Posterior cingulate gyrus (tissue), 11 donors: ENCODE measurements at regions of chr21 and their contacts with region 1.

Region 1: GRCh38 chr21:44709426-44710293 is 1.7 kb downstream of the TSPEAR start:
- DNase-seq: peak in 2 of 10 donors; percentile 7 to 80

Region 2: DNA sequence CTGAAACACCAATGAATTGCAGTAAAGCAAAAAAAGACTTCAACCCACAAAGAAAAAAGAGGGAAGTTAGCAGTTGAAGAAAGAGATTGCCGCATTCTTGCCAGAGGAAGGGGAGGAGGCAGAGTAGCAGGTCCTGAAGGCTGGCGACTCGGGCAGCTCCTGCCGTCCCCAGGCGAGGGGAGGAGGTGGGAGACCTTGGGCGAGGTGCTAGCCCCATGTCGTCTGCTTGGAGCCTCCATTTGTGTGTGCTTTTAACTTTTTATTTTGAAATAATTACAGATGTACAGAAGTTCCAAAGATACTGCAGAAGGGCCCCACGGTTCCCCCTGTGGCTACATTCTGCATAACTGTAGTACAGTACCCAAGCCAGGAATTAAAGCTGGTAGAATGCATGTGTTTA is 349.5 kb before region 1 on chr21:
- intact Hi-C with region 1: no loop called
- DNase-seq: peak in 2 of 10 donors; percentile 51 to 55

Region 3: DNA sequence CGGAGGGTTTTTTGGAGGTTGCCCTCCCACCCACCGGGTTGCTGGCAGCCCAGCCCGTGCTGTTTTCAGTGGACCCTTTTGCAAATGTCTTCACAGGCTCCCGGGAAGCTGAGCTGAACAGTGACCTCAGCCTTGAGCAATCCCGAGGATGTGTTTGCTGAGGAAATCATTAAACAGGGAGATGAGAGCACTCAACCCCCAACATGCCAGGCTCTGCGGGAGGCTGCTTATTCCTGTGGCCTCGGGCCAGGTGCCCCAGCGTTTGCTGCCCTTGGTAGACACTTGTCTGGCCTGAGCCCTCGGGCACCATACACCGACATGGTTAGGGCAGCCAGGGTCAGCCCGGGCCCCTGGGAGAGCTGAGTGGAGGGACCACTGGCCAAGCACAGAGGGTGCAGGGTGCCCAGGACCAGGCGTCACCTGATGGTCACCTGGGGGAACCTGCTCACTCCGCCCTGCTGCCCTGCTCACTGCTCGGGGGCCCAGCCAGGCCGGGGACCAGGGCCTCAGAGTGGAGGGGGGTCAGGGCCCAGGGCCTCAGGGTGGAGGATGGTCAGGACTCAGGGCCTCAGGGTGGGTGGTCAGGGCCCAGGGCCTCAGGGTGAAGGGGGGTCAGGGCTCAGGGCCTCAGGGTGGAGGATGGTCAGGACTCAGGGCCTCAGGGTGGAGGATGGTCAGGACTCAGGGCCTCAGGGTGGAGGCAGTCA is 620.6 kb after region 1 on chr21:
- intact Hi-C with region 1: loop called (anchors 10 kb)
- DNase-seq: peak in 4 of 10 donors; percentile 16 to 75 (median 63)